AG04450 (cell line): ENCODE measurements at regions of chr1 and their contacts with region 1.

Region 1: GRCh38 chr1:109112652-109113285 is 1.1 kb upstream of the ELAPOR1 start:
- DNase-seq: peak; percentile 66
- H3K4me3 ChIP-seq: peak overlapping the region; percentile 41; the same call in 1 of the 2 replicates
- H3K27ac ChIP-seq: peak overlapping the region; percentile 21
- H3K27me3 ChIP-seq: peaks cover 36% of the 10 kb centered on the region
- CTCF ChIP-seq: peak; percentile 95

Region 2: GRCh38 chr1:109027841-109028240 is 84.9 kb before region 1 on chr1:
- CTCF ChIA-PET with region 1: interaction called, 12 read pairs
- POLR2A ChIA-PET with region 1: no interaction called
- DNase-seq: no peak
- H3K4me3 ChIP-seq: no peak overlapping the region
- H3K27ac ChIP-seq: no peak overlapping the region
- H3K27me3 ChIP-seq: no peaks in the 10 kb centered on the region
- CTCF ChIP-seq: no peak

Region 3: DNA sequence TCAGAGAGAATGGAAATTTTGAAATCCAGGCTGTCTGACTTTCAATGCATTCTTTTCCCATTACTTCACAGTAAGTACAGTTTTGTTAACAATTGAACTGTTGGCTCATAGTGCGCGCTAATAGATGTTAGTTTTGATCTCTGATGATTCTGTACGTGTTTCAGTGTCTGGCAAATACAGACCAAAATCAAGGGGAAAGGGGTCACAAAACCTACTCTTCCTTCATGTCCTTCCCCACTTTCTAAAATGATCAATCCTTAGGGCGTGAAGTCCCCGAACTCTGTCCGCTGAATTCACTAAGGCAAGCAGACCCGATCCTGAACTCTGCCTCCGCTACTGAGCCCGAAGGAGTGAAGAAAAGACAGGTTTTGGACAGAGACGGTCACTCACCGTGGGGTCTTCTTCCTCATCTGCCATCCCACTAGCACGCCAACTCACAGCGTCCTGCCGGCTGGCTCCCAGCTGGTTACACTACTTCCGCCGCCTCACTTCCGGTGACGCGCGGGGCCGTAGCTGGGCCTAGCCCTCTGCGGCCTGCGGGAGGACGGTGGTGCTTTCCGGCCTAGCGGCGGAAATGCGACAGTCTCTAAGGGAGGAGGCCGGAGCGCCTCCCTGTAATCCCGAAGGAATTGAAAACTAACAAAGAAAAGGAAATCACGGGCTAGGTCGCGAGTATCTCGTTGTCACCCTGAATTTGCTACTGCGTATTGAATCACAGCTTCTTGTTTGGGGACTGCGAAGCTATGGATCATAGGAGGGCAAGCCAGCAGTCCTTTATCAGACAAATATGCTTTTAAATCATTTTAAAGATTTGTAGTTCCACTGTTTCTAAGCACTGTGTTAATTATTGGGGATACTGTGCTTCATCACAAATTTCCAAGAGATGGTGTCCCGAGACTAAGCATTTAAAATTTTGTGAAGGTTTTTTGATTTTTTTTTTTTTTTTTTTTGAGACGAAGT is 37.0 kb before region 1 on chr1 and contains the start of gene TAF13:
- CTCF ChIA-PET with region 1: interaction called, 3 read pairs
- POLR2A ChIA-PET with region 1: interaction called, 10 read pairs
- DNase-seq: peak; percentile 91
- H3K4me3 ChIP-seq: peak within 1 kb of the TSS; percentile 100
- H3K27ac ChIP-seq: peak within 1 kb of the TSS; percentile 99
- H3K27me3 ChIP-seq: no peaks in the 10 kb centered on the region
- CTCF ChIP-seq: peak; percentile 41; the same call in 1 of the 2 replicates
- polyA plus RNA-seq, gene TAF13: 61.8 and 81.9 TPM in 2 replicates

Region 4: DNA sequence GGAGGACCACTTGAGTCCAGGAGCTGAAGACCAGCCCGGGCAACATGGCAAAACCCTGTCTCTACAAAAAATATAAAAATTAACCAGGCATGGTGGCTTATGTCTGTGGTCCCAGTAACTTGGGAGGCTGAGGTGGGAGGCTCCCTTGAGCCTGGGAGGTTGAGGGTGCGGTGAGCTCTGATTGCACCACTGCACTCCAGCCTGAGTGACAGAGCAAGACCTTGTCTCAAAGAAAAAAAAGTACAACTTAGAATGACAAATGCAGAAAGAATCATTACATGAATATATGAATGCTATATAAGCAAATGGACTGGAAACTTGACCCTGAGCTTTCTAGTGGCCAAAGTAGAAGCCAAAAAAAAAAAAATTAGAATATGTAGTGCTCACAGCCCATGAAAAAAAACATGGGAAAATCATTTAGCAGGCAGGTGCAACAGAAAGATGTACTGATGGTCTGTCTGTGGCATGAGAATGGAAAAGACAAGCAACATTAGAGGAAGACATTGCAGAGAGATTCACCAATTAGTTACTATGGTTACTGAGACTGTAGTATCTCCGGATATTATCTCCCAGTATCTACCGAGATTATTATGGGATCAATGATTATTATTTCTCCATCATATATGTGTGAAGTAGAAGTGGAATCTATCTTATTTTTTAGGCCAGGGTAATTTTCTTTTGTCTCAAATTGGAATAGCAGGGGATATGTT is 20.4 kb after region 1 on chr1:
- CTCF ChIA-PET with region 1: interaction called, 29 read pairs
- POLR2A ChIA-PET with region 1: no interaction called
- DNase-seq: no peak
- H3K4me3 ChIP-seq: no peak overlapping the region
- H3K27ac ChIP-seq: no peak overlapping the region
- H3K27me3 ChIP-seq: no peaks in the 10 kb centered on the region
- CTCF ChIP-seq: no peak